Right cardiac atrium (tissue), 5 donors: ENCODE measurements at regions of chr4 and their contacts with region 1.

Region 1: DNA sequence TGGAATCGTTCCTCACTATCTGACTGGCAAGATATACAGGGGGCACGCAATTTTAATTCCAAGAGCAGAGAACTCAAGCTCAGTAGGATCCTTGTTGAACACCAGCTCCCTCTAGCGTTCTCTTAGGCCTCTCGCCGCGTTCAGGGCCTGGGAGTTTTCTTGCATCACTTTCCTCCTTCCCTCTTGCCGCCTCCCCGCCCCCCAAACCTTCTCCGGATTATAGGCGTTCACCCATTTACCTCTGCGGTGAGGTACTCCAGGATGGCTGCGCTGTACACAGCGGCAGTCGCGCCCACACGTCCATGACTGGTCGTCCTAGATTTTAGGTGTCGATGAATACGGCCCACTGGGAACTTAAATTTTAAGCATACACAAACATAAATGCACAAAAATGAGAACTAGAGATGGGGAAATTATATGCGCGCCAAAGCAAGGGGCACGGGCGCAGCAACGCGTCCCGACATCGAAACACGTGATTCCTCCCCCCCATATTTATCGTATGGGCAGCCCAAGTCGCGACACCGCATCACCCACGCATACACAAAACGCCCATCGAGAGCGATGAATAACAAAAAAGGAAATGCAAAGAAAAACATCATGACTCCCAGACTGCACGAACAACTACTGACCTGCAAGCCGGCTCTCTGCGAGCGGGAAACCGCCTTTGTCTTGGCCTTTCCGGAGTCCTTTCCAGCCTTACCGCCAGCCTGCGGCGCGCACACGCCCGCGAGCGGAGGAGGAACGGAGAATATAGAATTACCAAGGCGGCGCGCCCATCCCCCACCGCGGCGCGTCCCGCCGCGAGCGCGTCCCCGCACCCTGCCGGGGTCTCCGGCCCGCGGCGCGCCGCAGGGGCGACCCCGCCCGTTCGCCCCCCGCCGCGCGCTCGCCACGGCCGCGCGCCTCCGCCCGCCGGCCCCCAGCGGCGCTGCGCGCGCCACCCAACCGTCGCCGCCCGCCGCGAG is 759 bp downstream of the H2AZ1 start:
- DNase-seq: peak; percentile 83 to 92 (median 92)
- ATAC-seq: peak; percentile 32 to 38
- H3K4me3 ChIP-seq: peak overlapping the region; percentile 62
- H3K27ac ChIP-seq: peak overlapping the region; percentile 99
- H3K4me1 ChIP-seq: peaks cover 1% of the 10 kb centered on the region
- H3K27me3 ChIP-seq: no peaks in the 10 kb centered on the region

Region 2: DNA sequence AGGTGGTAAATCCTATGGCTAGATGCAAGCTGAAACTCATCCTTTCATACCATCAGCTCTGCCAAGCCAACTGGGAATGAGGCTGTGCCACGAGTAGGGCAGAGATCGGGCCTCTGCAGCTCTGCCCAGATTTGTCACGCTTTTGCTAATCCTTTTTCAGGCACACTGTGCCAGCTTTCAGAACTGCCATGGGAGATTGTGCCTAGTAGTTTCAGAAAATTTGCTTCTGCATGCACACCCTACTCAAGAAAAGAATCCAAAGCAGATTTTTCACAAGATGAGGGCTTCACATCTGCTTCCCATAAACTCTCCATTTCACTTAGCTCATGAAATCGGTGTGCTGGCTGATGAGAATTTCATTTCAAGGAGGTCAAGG is 510.9 kb before region 1 on chr4:
- intact Hi-C with region 1: no loop called
- DNase-seq: no peak
- ATAC-seq: no peak
- H3K4me3 ChIP-seq: no peak overlapping the region
- H3K27ac ChIP-seq: no peak overlapping the region
- H3K4me1 ChIP-seq: peaks cover 2% of the 10 kb centered on the region
- H3K27me3 ChIP-seq: no peaks in the 10 kb centered on the region

Region 3: DNA sequence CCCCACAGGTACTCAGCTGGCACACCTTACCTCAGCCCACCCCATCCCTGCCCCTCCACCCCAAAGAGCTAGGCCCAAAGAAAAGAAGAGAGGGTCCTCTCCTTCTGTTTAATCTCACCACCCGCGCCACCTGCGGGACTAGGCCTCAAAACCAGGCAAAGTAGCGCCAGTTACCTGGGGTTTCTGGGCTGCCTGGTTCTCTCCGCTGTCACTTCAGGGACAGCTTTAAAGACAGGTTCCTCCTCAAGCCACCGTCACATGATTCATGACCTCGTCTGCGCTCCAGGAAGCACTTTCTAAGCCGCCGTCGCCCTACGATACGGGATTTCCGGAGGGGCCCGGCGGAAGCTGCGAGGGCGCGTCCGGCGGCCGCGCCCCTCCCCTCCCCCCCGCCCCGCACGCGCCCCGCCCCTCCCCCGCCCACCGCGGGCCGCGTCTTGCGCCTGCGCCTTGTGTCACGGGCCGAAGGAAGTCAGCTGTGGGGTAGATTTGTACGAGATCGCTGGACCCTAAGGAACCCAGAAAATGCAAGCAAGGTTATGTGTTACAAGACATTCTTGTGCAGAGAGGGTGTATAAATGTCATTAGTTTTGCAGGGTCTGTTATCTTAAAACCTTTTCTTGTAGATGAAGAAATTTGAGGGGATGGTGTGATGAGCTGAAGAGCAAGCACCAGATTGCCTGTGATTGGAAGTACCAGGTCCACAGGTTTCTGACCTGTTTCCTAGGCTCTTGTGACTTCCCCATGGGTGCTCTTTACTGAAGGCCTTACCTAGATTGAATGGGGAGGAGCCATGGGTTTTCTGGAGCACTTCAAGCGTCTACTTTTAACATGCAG is 54.9 kb before region 1 on chr4 and contains the start of gene LAMTOR3:
- intact Hi-C with region 1: loop called (anchors 5 to 10 kb)
- DNase-seq: peak; percentile 92 to 96 (median 96)
- ATAC-seq: peak; percentile 99
- H3K4me3 ChIP-seq: peak within 1 kb of the TSS; percentile 94
- H3K27ac ChIP-seq: peak within 1 kb of the TSS; percentile 89
- H3K4me1 ChIP-seq: peaks cover 2% of the 10 kb centered on the region
- H3K27me3 ChIP-seq: no peaks in the 10 kb centered on the region
- total RNA-seq, gene LAMTOR3: 24.9 to 38.3 (median 32.4) TPM

Region 4: DNA sequence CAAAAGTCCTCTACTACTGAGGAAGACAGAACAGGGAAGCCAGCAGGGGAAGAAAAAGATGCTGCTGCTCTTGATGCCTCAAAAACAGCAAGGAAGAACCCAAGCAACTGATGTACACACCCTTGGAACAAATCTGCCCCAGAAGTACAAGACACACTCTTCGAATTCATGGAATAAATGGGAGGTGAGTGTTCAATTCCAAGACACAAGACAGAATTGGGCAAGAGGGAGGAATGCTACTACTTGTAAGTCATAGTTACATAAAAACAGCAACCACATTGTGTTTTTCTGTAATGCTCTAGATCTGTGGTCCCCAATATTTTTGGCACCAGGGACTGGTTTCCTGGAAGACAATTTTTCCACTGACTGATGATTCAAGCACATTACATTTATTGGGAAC is 58.7 kb after region 1 on chr4:
- intact Hi-C with region 1: no loop called
- DNase-seq: no peak
- ATAC-seq: no peak
- H3K4me3 ChIP-seq: no peak overlapping the region
- H3K27ac ChIP-seq: no peak overlapping the region
- H3K4me1 ChIP-seq: no peaks in the 10 kb centered on the region
- H3K27me3 ChIP-seq: no peaks in the 10 kb centered on the region